Activated CD4-positive, alpha-beta T cell treated with anti-CD3 and anti-CD28 coated beads for 36 hours (primary cell): ENCODE measurements at regions of chr9 and their contacts with region 1.

Region 1: GRCh38 chr9:31759703-31760102 is 624.7 kb upstream of the ACO1 start:
- DNase-seq: no peak
- ATAC-seq: no peak
- H3K4me3 Mint-ChIP-seq: no peak overlapping the region
- H3K27ac Mint-ChIP-seq: no peak overlapping the region
- H3K4me1 Mint-ChIP-seq: no peaks in the 10 kb centered on the region
- H3K27me3 Mint-ChIP-seq: no peaks in the 10 kb centered on the region

Region 2: DNA sequence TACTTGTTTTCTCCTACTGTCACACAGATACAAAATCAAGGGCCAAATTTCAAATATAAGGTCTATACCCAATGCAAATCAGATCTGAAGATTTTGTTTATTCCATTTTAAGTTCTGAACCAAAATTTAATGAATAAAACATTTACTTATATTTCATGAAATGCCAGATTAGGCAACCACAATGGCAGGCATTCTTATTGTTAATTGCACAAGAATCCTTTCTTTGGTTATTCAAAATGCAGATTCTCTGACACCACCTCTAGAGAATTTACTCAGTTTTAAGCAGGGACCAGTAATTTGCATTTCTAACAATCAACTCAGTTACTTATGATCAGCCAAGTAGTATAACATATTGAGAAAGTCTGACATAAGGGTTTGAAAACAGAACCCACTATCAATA is 347.6 kb before region 1 on chr9:
- CTCF ChIA-PET with region 1: no interaction called
- POLR2A ChIA-PET with region 1: no interaction called
- intact Hi-C with region 1: no loop called
- DNase-seq: no peak
- ATAC-seq: no peak
- H3K4me3 Mint-ChIP-seq: no peak overlapping the region
- H3K27ac Mint-ChIP-seq: no peak overlapping the region
- H3K4me1 Mint-ChIP-seq: no peaks in the 10 kb centered on the region
- H3K27me3 Mint-ChIP-seq: no peaks in the 10 kb centered on the region

Region 3: DNA sequence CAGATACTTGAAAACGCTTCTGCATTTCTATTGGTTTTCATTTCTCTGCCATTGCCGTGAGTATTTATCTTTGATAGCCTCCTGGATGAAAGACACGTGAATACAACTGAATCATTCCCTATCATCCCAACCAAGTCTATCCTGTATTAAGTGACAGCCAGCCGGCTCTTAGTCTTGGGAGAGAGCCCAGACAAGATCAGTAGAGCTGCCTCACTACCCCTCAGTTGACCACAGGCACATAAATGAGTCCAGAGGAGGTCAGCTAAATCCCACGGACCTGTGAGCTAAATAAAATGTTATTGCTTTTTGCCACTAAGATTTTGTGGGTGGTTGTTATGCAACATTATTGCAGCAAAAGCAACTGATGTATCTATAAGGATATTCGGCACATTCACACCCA is 14.2 kb before region 1 on chr9:
- CTCF ChIA-PET with region 1: interaction called, 3 read pairs
- POLR2A ChIA-PET with region 1: no interaction called
- intact Hi-C with region 1: loop called in 1 of 2 experiments (anchors 1 kb)
- DNase-seq: no peak
- ATAC-seq: no peak
- H3K4me3 Mint-ChIP-seq: no peak overlapping the region
- H3K27ac Mint-ChIP-seq: no peak overlapping the region
- H3K4me1 Mint-ChIP-seq: no peaks in the 10 kb centered on the region
- H3K27me3 Mint-ChIP-seq: no peaks in the 10 kb centered on the region

Region 4: GRCh38 chr9:31776471-31776870 is 16.8 kb after region 1 on chr9:
- CTCF ChIA-PET with region 1: no interaction called
- POLR2A ChIA-PET with region 1: no interaction called
- intact Hi-C with region 1: no loop called
- DNase-seq: no peak
- ATAC-seq: no peak
- H3K4me3 Mint-ChIP-seq: no peak overlapping the region
- H3K27ac Mint-ChIP-seq: no peak overlapping the region
- H3K4me1 Mint-ChIP-seq: no peaks in the 10 kb centered on the region
- H3K27me3 Mint-ChIP-seq: no peaks in the 10 kb centered on the region

Region 5: DNA sequence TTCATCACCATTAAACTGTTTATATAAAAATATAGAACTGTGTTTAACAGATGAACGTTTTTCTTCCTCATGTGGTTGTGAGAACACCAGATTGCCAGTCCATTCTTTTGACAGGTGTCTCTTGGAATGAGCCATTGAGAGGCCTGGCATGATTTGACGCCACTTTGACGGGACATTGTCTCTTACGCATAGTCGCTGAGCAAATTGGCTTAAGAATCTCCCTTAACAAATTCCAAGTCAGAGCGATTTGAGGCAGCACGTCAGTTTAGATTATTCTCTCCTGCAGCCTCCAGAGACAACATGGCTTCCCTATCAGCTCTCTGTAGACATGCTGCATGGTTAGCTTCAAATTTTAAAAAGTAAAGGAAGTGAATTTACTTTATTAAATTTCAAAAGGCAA is 114.0 kb after region 1 on chr9:
- CTCF ChIA-PET with region 1: no interaction called
- POLR2A ChIA-PET with region 1: no interaction called
- intact Hi-C with region 1: no loop called
- DNase-seq: no peak
- ATAC-seq: no peak
- H3K4me3 Mint-ChIP-seq: no peak overlapping the region
- H3K27ac Mint-ChIP-seq: no peak overlapping the region
- H3K4me1 Mint-ChIP-seq: no peaks in the 10 kb centered on the region
- H3K27me3 Mint-ChIP-seq: no peaks in the 10 kb centered on the region